K562 (cell line): ENCODE measurements at regions of chr1 and their contacts with region 1.

Region 1: DNA sequence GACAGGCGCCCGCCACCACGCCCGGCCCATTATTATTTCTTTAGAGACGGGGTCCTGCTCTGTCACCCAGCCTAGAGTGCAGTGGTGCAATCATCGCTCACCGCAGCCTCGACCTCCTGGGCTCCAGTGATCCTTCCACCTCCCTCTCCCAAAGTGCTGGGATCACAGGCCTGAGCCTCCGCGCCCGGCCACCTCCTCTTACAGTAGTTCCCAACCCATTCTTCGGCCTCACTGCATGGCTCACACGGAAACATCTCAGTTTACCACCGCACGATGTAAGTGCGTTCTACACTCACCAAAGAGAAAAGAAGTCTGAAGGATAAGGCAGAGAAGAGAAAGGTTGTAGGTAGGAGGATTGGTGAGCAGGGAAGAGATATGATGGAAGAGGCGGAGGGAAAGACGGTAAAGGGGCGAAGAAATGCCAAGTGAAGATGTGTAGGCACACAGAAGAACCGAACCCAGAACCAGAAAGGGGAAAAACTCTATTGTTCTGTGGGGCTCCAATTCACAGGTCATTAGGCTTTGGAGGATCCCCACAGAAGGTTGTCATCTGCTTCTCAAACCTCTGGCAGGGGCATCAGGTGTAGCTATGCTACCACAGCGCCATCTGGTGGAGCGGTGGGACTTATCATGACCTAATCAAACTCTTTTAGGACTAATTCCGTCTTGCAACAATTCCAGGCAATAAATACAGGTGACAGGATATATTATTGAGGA is 504.2 kb downstream of the SMYD3 start:
- DNase-seq: peak; percentile 80 to 90 (median 82)
- ATAC-seq: peak; percentile 94
- H3K4me3 ChIP-seq: no peak overlapping the region
- H3K27ac ChIP-seq: no peak overlapping the region
- H3K4me1 ChIP-seq: peaks cover under 1 to 3% of the 10 kb centered on the region in 2 experiments; a peak in 3 of 5 replicates
- H3K27me3 ChIP-seq: no peaks in the 10 kb centered on the region
- CTCF ChIP-seq: peak; percentile 87 to 94 (median 89)
- EP300 ChIP-seq: no peak
- POLR2A ChIP-seq: no peak
- RAD21 ChIP-seq: peak; percentile 93 to 97

Region 2: DNA sequence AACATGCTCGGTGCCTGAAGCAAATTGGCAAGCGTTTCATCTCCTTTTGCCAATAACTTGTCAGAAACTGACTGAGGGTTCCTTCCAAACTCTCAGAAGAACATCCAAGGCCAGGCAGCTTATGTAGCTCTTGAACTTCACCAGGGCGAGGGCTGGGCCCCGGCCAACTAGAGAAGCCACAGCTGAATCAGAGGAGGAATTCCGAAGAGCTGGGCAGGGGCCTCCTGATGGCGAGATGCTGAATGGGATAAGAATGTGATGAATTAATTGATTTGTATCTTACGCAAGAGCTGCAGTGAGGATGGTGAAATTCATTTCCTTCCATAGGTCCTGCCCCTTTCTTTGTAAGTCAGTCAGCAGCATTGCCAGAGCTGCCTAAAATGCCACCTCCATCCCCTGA is 502.3 kb before region 1 on chr1:
- CTCF ChIA-PET with region 1: no interaction called
- POLR2A ChIA-PET with region 1: no interaction called
- in situ Hi-C with region 1: no loop called
- intact Hi-C with region 1: loop called (anchors 5 kb)
- DNase-seq: no peak
- ATAC-seq: no peak
- H3K4me3 ChIP-seq: no peak overlapping the region
- H3K27ac ChIP-seq: no peak overlapping the region
- H3K4me1 ChIP-seq: no peaks in the 10 kb centered on the region
- H3K27me3 ChIP-seq: peaks cover 10 to 24% of the 10 kb centered on the region in 2 experiments; a peak in 3 of 5 replicates
- CTCF ChIP-seq: no peak
- EP300 ChIP-seq: no peak
- POLR2A ChIP-seq: no peak
- RAD21 ChIP-seq: no peak

Region 3: GRCh38 chr1:245512980-245513578 is 489.8 kb before region 1 on chr1:
- CTCF ChIA-PET with region 1: interaction called, 8 read pairs
- POLR2A ChIA-PET with region 1: no interaction called
- in situ Hi-C with region 1: no loop called
- intact Hi-C with region 1: loop called (anchors 2 kb)
- DNase-seq: peak; percentile 54 to 72 (median 56)
- ATAC-seq: peak; percentile 97
- H3K4me3 ChIP-seq: no peak overlapping the region
- H3K27ac ChIP-seq: no peak overlapping the region
- H3K4me1 ChIP-seq: no peaks in the 10 kb centered on the region
- H3K27me3 ChIP-seq: peaks cover 24 to 44% of the 10 kb centered on the region in 2 experiments
- CTCF ChIP-seq: peak in 2 of 3 experiments; percentile 26 to 54; a peak in 3 of 6 replicates
- EP300 ChIP-seq: no peak
- POLR2A ChIP-seq: no peak
- RAD21 ChIP-seq: no peak

Region 4: DNA sequence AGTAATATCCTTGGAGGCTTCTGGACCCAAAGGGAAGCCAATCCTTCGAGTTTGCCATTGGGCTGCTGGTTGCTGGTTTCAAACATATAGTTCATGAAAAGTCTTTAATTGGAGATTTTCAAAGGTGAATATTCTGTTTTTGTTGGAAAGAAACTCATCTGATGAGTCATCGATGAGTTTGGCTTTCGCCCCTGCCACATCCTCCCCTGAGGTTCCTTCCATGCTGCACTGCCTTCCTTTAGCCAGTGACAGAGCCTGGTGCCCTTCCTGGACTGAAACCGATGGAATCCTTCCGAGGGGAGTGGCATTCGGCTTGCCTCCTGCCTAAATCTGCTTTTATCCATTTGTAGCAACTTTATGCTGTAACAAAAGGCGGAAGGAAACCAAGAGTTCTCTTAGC is 298.1 kb before region 1 on chr1:
- CTCF ChIA-PET with region 1: no interaction called
- POLR2A ChIA-PET with region 1: no interaction called
- in situ Hi-C with region 1: no loop called
- intact Hi-C with region 1: loop called (anchors 5 kb)
- DNase-seq: no peak
- ATAC-seq: 0 out of 3 replicates have a peak, but pooled peaks have one; percentile 37
- H3K4me3 ChIP-seq: no peak overlapping the region
- H3K27ac ChIP-seq: no peak overlapping the region
- H3K4me1 ChIP-seq: no peaks in the 10 kb centered on the region
- H3K27me3 ChIP-seq: peaks cover 40 to 74% of the 10 kb centered on the region in 2 experiments; a peak in 4 of 5 replicates
- CTCF ChIP-seq: no peak
- EP300 ChIP-seq: no peak
- POLR2A ChIP-seq: no peak
- RAD21 ChIP-seq: no peak

Region 5: DNA sequence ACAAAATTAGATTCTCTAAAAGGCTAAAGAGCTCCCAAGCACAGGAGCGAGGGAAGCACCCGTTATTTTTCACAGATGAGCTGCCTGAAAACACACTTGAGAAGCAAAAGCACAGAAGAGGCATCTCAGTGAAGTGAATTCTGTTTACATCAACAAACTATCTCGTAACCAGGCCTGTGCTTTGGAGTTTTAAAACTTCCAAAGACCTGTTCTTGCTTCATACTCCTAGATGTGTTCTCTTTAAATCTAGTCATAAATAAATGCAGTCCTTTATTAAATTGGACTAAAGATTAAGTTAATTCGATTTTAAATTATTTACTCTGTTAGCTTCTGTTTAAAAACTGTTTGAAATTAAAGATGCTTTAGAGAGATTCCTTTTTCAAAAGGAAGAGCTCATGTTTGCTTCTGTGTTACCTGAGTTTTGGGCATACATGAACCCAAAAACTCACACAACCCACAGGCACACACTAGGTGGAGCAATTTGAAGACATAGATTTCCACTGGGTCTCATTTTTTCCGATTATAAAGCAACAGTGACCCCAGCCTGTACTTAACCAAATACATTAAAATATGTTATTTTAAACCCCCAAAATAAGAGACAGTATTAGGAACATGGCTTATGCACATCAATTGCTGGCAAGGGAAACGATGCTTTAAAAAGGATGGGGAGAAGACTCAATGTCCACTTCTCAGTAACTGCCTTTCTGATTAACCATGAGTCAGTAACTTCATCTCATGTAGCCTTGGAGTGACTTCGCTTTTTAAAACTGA is 144.0 kb before region 1 on chr1:
- CTCF ChIA-PET with region 1: interaction called, 7 read pairs
- POLR2A ChIA-PET with region 1: no interaction called
- in situ Hi-C with region 1: no loop called
- intact Hi-C with region 1: loop called (anchors 5 kb)
- DNase-seq: no peak
- ATAC-seq: peak; percentile 46; the same call in 1 of the 3 replicates
- H3K4me3 ChIP-seq: no peak overlapping the region
- H3K27ac ChIP-seq: no peak overlapping the region; the same call in 2 of the 3 replicates
- H3K4me1 ChIP-seq: no peaks in the 10 kb centered on the region
- H3K27me3 ChIP-seq: no peaks in the 10 kb centered on the region
- CTCF ChIP-seq: peak; percentile 25 to 47 (median 39); a peak in 4 of 6 replicates
- EP300 ChIP-seq: no peak
- POLR2A ChIP-seq: no peak
- RAD21 ChIP-seq: peak in 1 of 2 experiments; percentile 44; a peak in 2 of 4 replicates

Region 6: DNA sequence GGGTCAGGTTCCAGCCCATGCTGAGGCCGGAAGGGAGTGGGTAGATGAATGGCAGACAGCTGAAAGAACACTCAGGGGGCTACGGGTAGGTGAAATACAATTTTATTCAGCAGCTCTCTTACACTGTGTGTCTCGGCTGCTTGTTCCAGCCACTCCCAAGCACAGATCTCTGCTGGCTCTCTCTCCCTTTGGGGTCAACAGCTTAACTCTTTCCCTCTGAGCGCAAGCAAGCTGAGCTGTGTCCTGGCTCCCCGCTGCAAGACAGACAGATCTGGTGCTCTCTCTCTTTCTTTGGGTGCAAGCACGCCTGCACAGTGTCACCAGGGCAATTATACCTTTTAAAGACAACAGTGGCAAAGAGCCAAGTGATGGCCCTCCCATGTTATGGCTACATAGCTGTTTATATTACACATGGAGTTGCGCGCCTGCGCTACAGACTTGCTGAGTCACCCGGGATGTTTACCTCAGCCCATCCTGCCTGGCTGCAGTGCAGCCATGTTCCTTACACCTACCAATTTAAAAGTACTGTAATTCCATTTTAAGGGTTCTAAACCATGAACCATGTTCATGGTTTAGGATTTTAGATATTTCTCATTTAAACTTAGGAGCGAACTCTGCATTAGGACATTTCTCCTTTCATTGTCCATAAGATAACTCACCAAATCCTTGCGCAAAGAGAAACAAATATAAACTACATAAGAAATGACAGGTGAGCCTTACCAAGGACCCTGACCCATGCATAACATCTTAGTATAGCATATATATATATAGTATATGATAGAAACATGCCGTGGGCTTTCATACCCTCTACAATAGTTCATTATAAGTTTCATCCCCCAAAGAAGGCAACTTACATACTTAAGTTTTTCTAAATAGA is 107.7 kb after region 1 on chr1:
- CTCF ChIA-PET with region 1: no interaction called
- POLR2A ChIA-PET with region 1: no interaction called
- in situ Hi-C with region 1: no loop called
- intact Hi-C with region 1: no loop called
- DNase-seq: peak; percentile 76 to 92 (median 78)
- ATAC-seq: peak; percentile 87
- H3K4me3 ChIP-seq: no peak overlapping the region
- H3K27ac ChIP-seq: peak overlapping the region; percentile 71
- H3K4me1 ChIP-seq: peaks cover 15 to 65% of the 10 kb centered on the region in 2 experiments
- H3K27me3 ChIP-seq: no peaks in the 10 kb centered on the region
- CTCF ChIP-seq: no peak
- EP300 ChIP-seq: peak; percentile 64; the same call in 1 of the 2 replicates
- POLR2A ChIP-seq: no peak
- RAD21 ChIP-seq: peak; percentile 20 to 36; a peak in 2 of 4 replicates

Region 7: GRCh38 chr1:246280551-246280950 is 277.7 kb after region 1 on chr1:
- CTCF ChIA-PET with region 1: no interaction called
- POLR2A ChIA-PET with region 1: no interaction called
- in situ Hi-C with region 1: loop called (anchors 25 kb)
- intact Hi-C with region 1: no loop called
- DNase-seq: peak in 1 of 4 experiments; percentile 58
- ATAC-seq: peak; percentile 86
- H3K4me3 ChIP-seq: no peak overlapping the region
- H3K27ac ChIP-seq: no peak overlapping the region
- H3K4me1 ChIP-seq: no peaks in the 10 kb centered on the region; a peak in 3 of 5 replicates
- H3K27me3 ChIP-seq: no peaks in the 10 kb centered on the region
- CTCF ChIP-seq: peak; percentile 36 to 75 (median 59); a peak in 5 of 6 replicates
- EP300 ChIP-seq: no peak
- POLR2A ChIP-seq: no peak
- RAD21 ChIP-seq: peak; percentile 93 to 96

Region 8: GRCh38 chr1:246450611-246451251 is 447.8 kb after region 1 on chr1:
- CTCF ChIA-PET with region 1: no interaction called
- POLR2A ChIA-PET with region 1: no interaction called
- in situ Hi-C with region 1: loop called (anchors 5 kb)
- intact Hi-C with region 1: no loop called
- DNase-seq: peak; percentile 41 to 57 (median 56)
- ATAC-seq: peak; percentile 85
- H3K4me3 ChIP-seq: no peak overlapping the region
- H3K27ac ChIP-seq: no peak overlapping the region
- H3K4me1 ChIP-seq: no peaks in the 10 kb centered on the region
- H3K27me3 ChIP-seq: no peaks in the 10 kb centered on the region
- CTCF ChIP-seq: peak; percentile 63 to 95 (median 69)
- EP300 ChIP-seq: no peak
- POLR2A ChIP-seq: no peak
- RAD21 ChIP-seq: peak; percentile 96 to 97